Esophagus muscularis mucosa (tissue), 4 donors: ENCODE measurements at regions of chr4 and their contacts with region 1.

Region 1: DNA sequence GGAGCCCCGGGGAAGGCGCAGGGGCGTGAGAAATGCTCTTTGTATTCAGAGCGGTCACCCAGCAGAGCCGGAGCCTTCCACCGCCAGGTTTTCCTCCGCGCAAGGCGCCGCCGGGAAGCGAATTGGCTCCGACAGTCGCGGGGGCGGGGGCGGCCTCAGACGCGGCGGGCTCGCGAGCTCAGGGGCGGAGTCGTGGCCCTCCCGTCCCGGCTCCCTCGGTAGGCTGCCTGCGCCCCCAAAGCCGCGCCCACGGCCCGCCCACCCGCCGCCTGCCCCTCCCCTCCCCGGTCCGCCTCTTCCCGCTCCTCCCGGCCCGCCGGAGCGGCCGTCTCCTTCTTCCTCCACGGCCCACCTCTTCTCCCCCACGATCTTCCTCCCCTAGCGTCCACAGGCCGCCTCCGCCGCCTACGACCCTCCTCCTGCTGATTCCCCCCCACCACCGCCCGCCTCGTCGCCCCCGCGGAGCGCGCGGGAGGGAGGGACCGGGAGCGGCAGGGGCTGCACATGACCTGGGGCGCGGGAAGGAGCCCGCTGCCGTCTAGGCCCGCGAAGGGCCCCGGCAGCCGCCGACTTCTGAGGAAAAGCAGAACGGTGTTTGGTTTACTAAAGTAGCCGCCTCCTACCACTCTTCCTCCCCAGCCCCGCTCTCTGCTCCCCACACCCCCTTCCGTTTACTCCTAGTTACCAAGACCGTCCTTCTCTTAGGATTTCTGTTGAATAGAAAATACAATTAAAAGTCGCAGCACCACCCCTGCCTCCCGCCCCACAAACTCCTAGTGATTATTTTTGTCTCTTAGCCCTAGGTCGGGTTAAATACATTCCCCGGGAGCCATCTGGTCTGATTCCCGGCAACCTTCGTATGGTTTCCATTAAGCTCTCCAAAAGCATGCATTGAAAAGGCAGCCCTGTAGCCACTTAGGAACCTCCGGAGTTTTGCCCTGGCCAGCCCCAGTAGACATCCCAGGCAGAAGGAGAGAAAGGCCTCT is 53.2 kb downstream of the C4orf51 start:
- DNase-seq: peak; percentile 95
- H3K4me3 ChIP-seq: peak overlapping the region; percentile 64 to 74 (median 65)
- H3K27ac ChIP-seq: peak overlapping the region; percentile 94 to 100 (median 98)
- H3K4me1 ChIP-seq: peaks cover 42 to 66% (median 64%) of the 10 kb centered on the region in 4 donors
- H3K27me3 ChIP-seq: no peaks in the 10 kb centered on the region
- CTCF ChIP-seq: peak in 2 of 3 experiments; percentile 7 to 17
- EP300 ChIP-seq: peak; percentile 24
- POLR2A ChIP-seq: peak; percentile 84

Region 2: GRCh38 chr4:145881989-145882388 is 148.8 kb after region 1 on chr4:
- intact Hi-C with region 1: loop called (anchors 5 kb)
- DNase-seq: no peak
- H3K4me3 ChIP-seq: no peak overlapping the region
- H3K27ac ChIP-seq: no peak overlapping the region
- H3K4me1 ChIP-seq: peaks cover 38 to 55% (median 52%) of the 10 kb centered on the region in 4 donors
- H3K27me3 ChIP-seq: no peaks in the 10 kb centered on the region
- CTCF ChIP-seq: no peak
- EP300 ChIP-seq: no peak
- POLR2A ChIP-seq: no peak